ENCODE measurements at regions of chr1 and their contacts with region 1.

Region 1: GRCh38 chr1:246506674-246507481 is at the start of gene SMYD3:
- DNase-seq: peak; percentile 69 to 87
- H3K4me3 ChIP-seq: peak within 1 kb of the TSS; percentile 64 to 94 (median 74)
- H3K27ac ChIP-seq: no peak within 1 kb of the TSS; the same call in 1 of the 2 replicates
- H3K4me1 ChIP-seq: peaks cover 0 to 6% (median 3%) of the 10 kb centered on the region in 4 experiments; a peak in 3 of 7 replicates
- H3K27me3 ChIP-seq: peaks cover 0 to 3% (median 0%) of the 10 kb centered on the region in 4 experiments; a peak in 1 of 7 replicates
- CTCF ChIP-seq: no peak
- EP300 ChIP-seq: no peak
- POLR2A ChIP-seq: peak in 1 of 2 experiments; percentile 43; a peak in 2 of 3 replicates
- RAD21 ChIP-seq: no peak
- total RNA-seq, gene SMYD3: 25.0 and 25.4 TPM in 2 replicates

Region 2: GRCh38 chr1:246492611-246493245 is 14.2 kb before region 1 on chr1:
- CTCF ChIA-PET with region 1: interaction called, 12 read pairs
- POLR2A ChIA-PET with region 1: no interaction called
- DNase-seq: peak in 1 of 2 experiments; percentile 71
- H3K4me3 ChIP-seq: no peak overlapping the region
- H3K27ac ChIP-seq: no peak overlapping the region; the same call in 1 of the 2 replicates
- H3K4me1 ChIP-seq: peaks cover 0 to 5% (median 3%) of the 10 kb centered on the region in 4 experiments; a peak in 3 of 7 replicates
- H3K27me3 ChIP-seq: no peaks in the 10 kb centered on the region
- CTCF ChIP-seq: peak; percentile 68 to 77 (median 70)
- EP300 ChIP-seq: no peak
- POLR2A ChIP-seq: no peak
- RAD21 ChIP-seq: peak; percentile 82 to 89

Region 3: GRCh38 chr1:246608616-246609376 is 101.9 kb after region 1 on chr1:
- CTCF ChIA-PET with region 1: no interaction called
- POLR2A ChIA-PET with region 1: no interaction called
- DNase-seq: no peak
- H3K4me3 ChIP-seq: no peak overlapping the region
- H3K27ac ChIP-seq: 0 out of 2 replicates have a peak overlapping the region, but pooled peaks have one; percentile 2
- H3K4me1 ChIP-seq: peaks cover 0 to 6% (median 1%) of the 10 kb centered on the region in 4 experiments; a peak in 5 of 7 replicates
- H3K27me3 ChIP-seq: no peaks in the 10 kb centered on the region
- CTCF ChIP-seq: peak in 1 of 3 experiments; percentile 9; a peak in 1 of 4 replicates
- EP300 ChIP-seq: no peak
- POLR2A ChIP-seq: no peak
- RAD21 ChIP-seq: no peak

Measured in H1 (cell line).